Activated naive CD4-positive, alpha-beta T cell treated with anti-CD3 and anti-CD28 coated beads, Interleukin-2, amount 10 ng/mL, durations not matched to agents 7 days and 5 days (primary cell): ENCODE measurements at regions of chr3 and their contacts with region 1.

Region 1: GRCh38 chr3:142828703-142829305 is 60.1 kb downstream of the PCOLCE2 start:
- DNase-seq: peak; percentile 78
- H3K4me3 Mint-ChIP-seq: no peak overlapping the region
- H3K27ac Mint-ChIP-seq: no peak overlapping the region
- H3K4me1 Mint-ChIP-seq: no peaks in the 10 kb centered on the region
- H3K27me3 Mint-ChIP-seq: peaks cover 23% of the 10 kb centered on the region

Region 2: GRCh38 chr3:142817897-142818296 is 10.9 kb before region 1 on chr3:
- CTCF ChIA-PET with region 1: interaction called, 13 read pairs
- DNase-seq: no peak
- H3K4me3 Mint-ChIP-seq: no peak overlapping the region
- H3K27ac Mint-ChIP-seq: no peak overlapping the region
- H3K4me1 Mint-ChIP-seq: no peaks in the 10 kb centered on the region
- H3K27me3 Mint-ChIP-seq: peaks cover 17% of the 10 kb centered on the region

Region 3: GRCh38 chr3:142987080-142987700 is 158.4 kb after region 1 on chr3:
- CTCF ChIA-PET with region 1: interaction called, 16 read pairs
- DNase-seq: no peak
- H3K4me3 Mint-ChIP-seq: no peak overlapping the region
- H3K27ac Mint-ChIP-seq: no peak overlapping the region
- H3K4me1 Mint-ChIP-seq: no peaks in the 10 kb centered on the region
- H3K27me3 Mint-ChIP-seq: peaks cover 19% of the 10 kb centered on the region

Region 4: GRCh38 chr3:142993958-142994442 is 165.2 kb after region 1 on chr3:
- CTCF ChIA-PET with region 1: interaction called, 24 read pairs
- DNase-seq: peak; percentile 76
- H3K4me3 Mint-ChIP-seq: no peak overlapping the region
- H3K27ac Mint-ChIP-seq: no peak overlapping the region
- H3K4me1 Mint-ChIP-seq: peaks cover 4% of the 10 kb centered on the region
- H3K27me3 Mint-ChIP-seq: peaks cover 11% of the 10 kb centered on the region

Region 5: DNA sequence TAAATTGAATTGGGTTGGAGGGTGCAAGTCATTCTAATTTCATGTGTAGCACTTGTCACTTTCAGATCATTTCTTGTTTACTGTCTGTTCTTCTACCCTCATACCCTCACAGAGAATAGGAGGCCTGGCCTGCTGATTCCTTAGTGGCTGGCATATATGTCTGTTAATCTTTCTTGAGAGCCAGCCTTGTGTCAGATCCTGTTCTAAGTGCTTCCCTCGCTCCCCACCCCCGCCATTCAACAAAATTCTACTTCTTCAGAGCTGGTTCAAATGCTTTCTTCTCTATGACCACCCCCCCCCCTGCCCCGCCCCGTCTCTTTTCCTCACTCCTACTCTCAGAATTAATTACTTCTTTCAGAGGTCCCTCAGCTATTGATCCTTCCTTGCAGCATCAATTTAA is 171.1 kb after region 1 on chr3:
- CTCF ChIA-PET with region 1: interaction called, 24 read pairs
- DNase-seq: no peak
- H3K4me3 Mint-ChIP-seq: peak overlapping the region; percentile 87
- H3K27ac Mint-ChIP-seq: no peak overlapping the region
- H3K4me1 Mint-ChIP-seq: peaks cover 28% of the 10 kb centered on the region
- H3K27me3 Mint-ChIP-seq: peaks cover 11% of the 10 kb centered on the region